Prostate gland (tissue), 2 donors: ENCODE measurements at regions of chr2 and their contacts with region 1.

Region 1: GRCh38 chr2:196453613-196454047 is 185.9 kb upstream of the CCDC150 start:
- DNase-seq: peak; percentile 8
- H3K4me3 ChIP-seq: no peak overlapping the region
- H3K27ac ChIP-seq: no peak overlapping the region
- H3K4me1 ChIP-seq: no peaks in the 10 kb centered on the region
- H3K27me3 ChIP-seq: no peaks in the 10 kb centered on the region
- CTCF ChIP-seq: peak in 3 of 4 experiments; percentile 13 to 29 (median 18)
- POLR2A ChIP-seq: no peak

Region 2: GRCh38 chr2:196291873-196292800 is 161.5 kb before region 1 on chr2:
- intact Hi-C with region 1: loop called (anchors 10 kb)
- DNase-seq: peak; percentile 83
- H3K4me3 ChIP-seq: no peak overlapping the region
- H3K27ac ChIP-seq: peak overlapping the region; percentile 1 to 5
- H3K4me1 ChIP-seq: no peaks in the 10 kb centered on the region
- H3K27me3 ChIP-seq: no peaks in the 10 kb centered on the region
- CTCF ChIP-seq: no peak
- POLR2A ChIP-seq: no peak

Region 3: DNA sequence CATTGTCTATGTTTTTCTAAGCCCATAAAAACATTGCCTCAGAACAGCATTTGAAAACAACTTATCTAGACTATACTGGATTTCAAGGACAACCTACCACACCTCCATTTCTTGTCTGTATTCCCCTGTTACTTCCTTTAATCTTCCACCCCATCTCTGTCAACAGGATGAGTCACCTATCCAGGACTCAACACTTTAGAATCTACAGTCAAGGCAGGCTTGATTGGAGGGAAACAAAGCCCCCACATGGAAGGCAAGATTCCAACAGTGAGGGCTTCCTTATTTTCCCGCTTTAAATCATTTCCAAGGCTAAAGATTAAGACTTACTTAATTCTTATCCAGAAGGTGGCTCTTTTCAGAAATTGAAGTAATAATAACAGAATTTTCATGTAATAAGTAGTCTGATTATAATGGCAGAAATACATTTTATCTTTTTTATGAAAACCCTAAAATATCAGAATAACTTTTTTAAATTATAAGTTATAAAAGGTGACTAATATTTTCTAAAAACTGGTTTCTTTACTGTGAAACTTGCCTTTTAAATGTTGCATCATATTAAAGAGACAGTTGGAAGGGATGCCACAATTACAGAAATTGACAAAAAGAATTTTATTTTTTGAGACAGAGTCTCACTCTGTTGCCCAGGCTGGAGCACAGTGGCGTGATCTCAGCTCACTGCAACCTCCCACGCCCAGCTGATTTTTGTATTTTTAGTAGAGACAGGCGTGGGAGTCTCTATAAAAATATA is 47.2 kb after region 1 on chr2:
- intact Hi-C with region 1: no loop called
- DNase-seq: no peak
- H3K4me3 ChIP-seq: no peak overlapping the region
- H3K27ac ChIP-seq: no peak overlapping the region
- H3K4me1 ChIP-seq: no peaks in the 10 kb centered on the region
- H3K27me3 ChIP-seq: no peaks in the 10 kb centered on the region
- CTCF ChIP-seq: no peak
- POLR2A ChIP-seq: no peak

Region 4: GRCh38 chr2:196528486-196529223 is 75.0 kb after region 1 on chr2:
- intact Hi-C with region 1: no loop called
- DNase-seq: no peak
- H3K4me3 ChIP-seq: no peak overlapping the region
- H3K27ac ChIP-seq: no peak overlapping the region
- H3K4me1 ChIP-seq: no peaks in the 10 kb centered on the region
- H3K27me3 ChIP-seq: no peaks in the 10 kb centered on the region
- CTCF ChIP-seq: no peak
- POLR2A ChIP-seq: no peak